MCF 10A (cell line): ENCODE measurements at regions of chr13 and their contacts with region 1.

Region 1: GRCh38 chr13:33169273-33169980 is 116.1 kb downstream of the STARD13 start:
- DNase-seq: peak; percentile 70
- H3K4me3 Mint-ChIP-seq: peak overlapping the region; percentile 28
- H3K27ac Mint-ChIP-seq: peak overlapping the region; percentile 99
- H3K4me1 Mint-ChIP-seq: peaks cover 71% of the 10 kb centered on the region
- H3K27me3 Mint-ChIP-seq: no peaks in the 10 kb centered on the region
- CTCF ChIP-seq: no peak

Region 2: GRCh38 chr13:32432856-32433255 is 736.6 kb before region 1 on chr13:
- CTCF ChIA-PET with region 1: no interaction called
- POLR2A ChIA-PET with region 1: no interaction called
- intact Hi-C with region 1: no loop called
- DNase-seq: peak; percentile 66
- H3K4me3 Mint-ChIP-seq: peak overlapping the region; percentile 48
- H3K27ac Mint-ChIP-seq: peak overlapping the region; percentile 75
- H3K4me1 Mint-ChIP-seq: peaks cover 5% of the 10 kb centered on the region
- H3K27me3 Mint-ChIP-seq: no peaks in the 10 kb centered on the region
- CTCF ChIP-seq: no peak

Region 3: DNA sequence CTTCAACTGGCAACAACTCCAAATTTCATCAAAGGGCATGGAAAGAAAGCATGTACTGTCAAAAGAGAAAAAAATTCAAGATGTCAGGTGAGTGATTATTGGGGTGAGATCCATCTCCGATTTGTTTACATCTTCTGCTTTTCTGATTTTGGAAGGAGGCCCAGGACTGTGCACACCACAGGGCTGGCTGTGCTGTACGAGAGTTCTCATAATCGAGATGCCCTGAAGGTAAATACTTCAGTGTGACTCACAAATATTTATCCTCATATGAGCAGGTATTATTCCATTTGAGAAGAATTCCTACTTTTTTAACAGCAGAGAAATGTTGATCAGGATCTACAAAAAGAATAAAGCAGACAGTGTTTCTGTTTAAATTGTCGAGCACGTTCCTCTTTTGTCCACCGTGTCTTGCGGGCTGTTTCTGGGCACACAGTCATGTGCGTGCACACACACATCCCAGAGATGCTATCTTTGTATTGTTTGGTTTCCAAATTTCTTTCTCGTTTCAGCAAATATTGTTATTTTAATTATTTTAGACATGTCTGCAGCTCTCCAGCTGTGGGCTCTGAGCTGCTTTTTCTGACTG is 49.5 kb before region 1 on chr13:
- CTCF ChIA-PET with region 1: interaction called, 4 read pairs
- POLR2A ChIA-PET with region 1: interaction called, 24 read pairs
- intact Hi-C with region 1: no loop called
- DNase-seq: peak; percentile 84
- H3K4me3 Mint-ChIP-seq: peak overlapping the region; percentile 42
- H3K27ac Mint-ChIP-seq: peak overlapping the region; percentile 87
- H3K4me1 Mint-ChIP-seq: peaks cover 23% of the 10 kb centered on the region
- H3K27me3 Mint-ChIP-seq: no peaks in the 10 kb centered on the region
- CTCF ChIP-seq: no peak

Region 4: GRCh38 chr13:33125821-33126570 is 43.4 kb before region 1 on chr13:
- CTCF ChIA-PET with region 1: interaction called, 4 read pairs
- POLR2A ChIA-PET with region 1: interaction called, 24 read pairs
- intact Hi-C with region 1: no loop called
- DNase-seq: peak; percentile 94
- H3K4me3 Mint-ChIP-seq: peak overlapping the region; percentile 4
- H3K27ac Mint-ChIP-seq: peak overlapping the region; percentile 79
- H3K4me1 Mint-ChIP-seq: peaks cover 26% of the 10 kb centered on the region
- H3K27me3 Mint-ChIP-seq: no peaks in the 10 kb centered on the region
- CTCF ChIP-seq: no peak

Region 5: GRCh38 chr13:33207615-33207961 is 38.2 kb after region 1 on chr13:
- CTCF ChIA-PET with region 1: no interaction called
- POLR2A ChIA-PET with region 1: interaction called, 13 read pairs
- intact Hi-C with region 1: no loop called
- DNase-seq: peak; percentile 81
- H3K4me3 Mint-ChIP-seq: peak overlapping the region; percentile 41
- H3K27ac Mint-ChIP-seq: peak overlapping the region; percentile 91
- H3K4me1 Mint-ChIP-seq: peaks cover 42% of the 10 kb centered on the region
- H3K27me3 Mint-ChIP-seq: no peaks in the 10 kb centered on the region
- CTCF ChIP-seq: no peak

Region 6: GRCh38 chr13:33218001-33218400 is 48.6 kb after region 1 on chr13:
- CTCF ChIA-PET with region 1: no interaction called
- POLR2A ChIA-PET with region 1: interaction called, 11 read pairs
- intact Hi-C with region 1: no loop called
- DNase-seq: peak; percentile 62
- H3K4me3 Mint-ChIP-seq: peak overlapping the region; percentile 37
- H3K27ac Mint-ChIP-seq: peak overlapping the region; percentile 94
- H3K4me1 Mint-ChIP-seq: peaks cover 67% of the 10 kb centered on the region
- H3K27me3 Mint-ChIP-seq: no peaks in the 10 kb centered on the region
- CTCF ChIP-seq: no peak

Region 7: GRCh38 chr13:33279414-33280273 is 110.2 kb after region 1 on chr13:
- CTCF ChIA-PET with region 1: interaction called, 4 read pairs
- POLR2A ChIA-PET with region 1: interaction called, 14 read pairs
- intact Hi-C with region 1: no loop called
- DNase-seq: peak; percentile 94
- H3K4me3 Mint-ChIP-seq: peak overlapping the region; percentile 91
- H3K27ac Mint-ChIP-seq: peak overlapping the region; percentile 95
- H3K4me1 Mint-ChIP-seq: peaks cover 67% of the 10 kb centered on the region
- H3K27me3 Mint-ChIP-seq: no peaks in the 10 kb centered on the region
- CTCF ChIP-seq: no peak

Region 8: GRCh38 chr13:33296793-33297425 is 127.5 kb after region 1 on chr13:
- CTCF ChIA-PET with region 1: no interaction called
- POLR2A ChIA-PET with region 1: no interaction called
- intact Hi-C with region 1: no loop called
- DNase-seq: no peak
- H3K4me3 Mint-ChIP-seq: no peak overlapping the region
- H3K27ac Mint-ChIP-seq: no peak overlapping the region
- H3K4me1 Mint-ChIP-seq: no peaks in the 10 kb centered on the region
- H3K27me3 Mint-ChIP-seq: no peaks in the 10 kb centered on the region
- CTCF ChIP-seq: no peak